GM18951 (cell line): ENCODE measurements at regions of chr17 and their contacts with region 1.

Region 1: DNA sequence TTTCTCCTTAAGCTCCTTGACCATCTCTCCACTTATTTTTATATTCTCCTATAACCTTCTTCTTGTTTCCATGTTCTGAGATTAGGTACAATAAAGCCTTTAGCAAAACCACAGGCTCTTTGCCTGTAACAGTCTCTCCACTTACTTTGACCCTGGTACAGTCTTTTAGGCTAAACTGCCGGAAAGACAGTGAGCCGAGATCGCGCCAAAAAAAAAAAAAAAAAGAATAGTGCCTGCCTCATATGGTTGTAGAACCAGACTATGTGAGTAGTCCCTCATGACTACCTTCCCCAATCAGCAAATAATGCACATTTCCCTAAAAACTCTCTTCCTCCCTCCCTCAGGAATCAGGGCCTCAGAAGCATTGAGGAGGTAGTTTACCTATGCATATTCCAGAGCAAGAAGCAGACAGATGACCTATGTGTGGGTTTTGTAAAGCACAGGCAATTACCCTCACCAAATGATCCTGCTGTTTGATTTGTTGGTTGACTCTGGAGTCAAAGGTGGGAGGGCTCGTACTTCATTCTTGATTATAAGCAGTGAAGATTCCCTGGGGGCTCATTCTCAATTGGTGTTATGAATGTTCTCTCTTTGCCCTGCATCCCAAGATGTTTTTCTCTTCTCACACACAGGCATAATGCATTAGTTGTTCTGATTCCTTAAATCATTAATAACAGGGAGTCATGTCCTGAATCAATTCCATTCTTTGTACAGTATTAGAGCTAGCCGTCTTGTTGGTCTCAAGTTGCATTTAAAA is 8.9 kb upstream of the NME1 start:
- POLR2A ChIP-seq: no peak

Region 2: GRCh38 chr17:49659661-49660382 is 1484.6 kb before region 1 on chr17:
- in situ Hi-C with region 1: no loop called
- POLR2A ChIP-seq: no peak

Region 3: DNA sequence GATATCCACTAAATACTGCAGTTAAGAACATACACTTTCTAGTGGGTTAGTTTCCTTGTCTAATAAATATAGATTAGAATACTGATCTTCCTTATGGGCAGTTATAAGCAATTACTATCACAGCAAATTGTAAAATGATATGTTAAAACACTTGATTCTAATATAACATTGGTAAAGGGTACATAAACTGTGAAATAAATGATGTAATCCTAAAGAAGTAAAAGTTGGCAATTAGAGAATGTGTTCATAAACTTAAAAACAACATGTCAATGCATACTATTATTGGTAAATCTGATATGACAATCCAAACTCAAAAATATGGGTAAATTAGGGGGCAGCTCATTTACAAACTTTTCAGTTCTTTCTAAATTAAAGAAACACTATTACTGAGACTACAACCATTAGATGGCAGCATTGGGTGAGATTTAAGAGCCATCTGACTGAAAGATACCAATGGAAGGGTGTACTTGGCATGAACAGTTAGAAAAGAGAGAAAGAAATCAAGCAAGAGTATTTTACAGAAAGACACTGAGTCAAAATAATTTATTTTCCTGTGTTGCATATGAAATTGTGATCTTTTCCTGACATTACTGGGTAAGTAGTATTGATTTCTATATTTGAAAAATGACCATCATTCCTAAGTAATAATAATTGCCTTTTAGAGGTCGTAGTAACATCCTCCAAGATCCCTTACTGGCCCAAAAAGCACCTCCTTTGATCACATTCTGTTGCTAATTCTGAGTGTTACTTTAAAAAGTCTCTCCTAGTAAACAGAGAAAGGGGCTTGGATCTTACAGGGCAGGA is 143.4 kb before region 1 on chr17:
- in situ Hi-C with region 1: loop called (anchors 5 kb)
- POLR2A ChIP-seq: no peak